Motor neuron (in vitro differentiated cells): ENCODE measurements at regions of chr4 and their contacts with region 1.

Region 1: GRCh38 chr4:140382732-140383131 is 9.3 kb downstream of the SCOC start:
- ATAC-seq: no peak
- H3K4me3 ChIP-seq: no peak overlapping the region
- H3K27ac ChIP-seq: no peak overlapping the region
- H3K4me1 ChIP-seq: peaks cover 0 to under 1% of the 10 kb centered on the region in 2 donors

Region 2: DNA sequence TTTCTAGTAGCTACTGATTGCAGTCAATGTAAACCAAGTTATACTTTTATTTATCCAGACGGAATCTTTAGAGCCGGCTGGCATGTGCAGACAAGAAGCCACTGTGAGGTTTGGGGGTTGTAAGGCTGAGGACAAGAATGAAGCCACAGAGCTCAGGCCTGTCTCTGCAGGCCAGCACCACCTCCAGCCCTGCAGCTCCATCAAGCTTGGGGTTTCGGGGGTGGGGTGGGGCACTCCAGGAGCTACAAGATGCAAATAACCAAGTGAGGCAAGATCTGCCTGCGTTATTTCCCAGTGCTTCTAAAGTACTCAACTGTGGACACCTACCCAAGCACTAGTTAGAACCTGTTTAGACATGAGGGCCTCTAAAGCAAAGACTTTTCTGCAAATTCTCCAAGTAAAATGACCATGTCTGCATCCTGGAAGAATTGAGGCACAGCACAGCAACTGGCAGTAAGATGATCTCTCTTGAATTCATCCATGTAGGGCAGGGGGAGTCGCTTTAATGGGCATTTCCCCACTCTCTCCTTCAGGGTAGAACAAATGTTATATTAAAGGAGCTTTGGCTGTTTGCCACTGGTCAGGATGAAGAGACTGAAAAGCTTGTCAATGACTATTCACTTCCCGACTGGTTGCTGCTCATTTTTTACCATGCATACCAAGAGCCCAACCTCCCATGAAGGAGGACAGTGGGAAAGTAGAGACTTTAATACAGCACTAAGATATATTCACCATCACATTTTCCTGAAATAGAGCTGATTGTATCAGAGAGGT is 494.6 kb before region 1 on chr4:
- in situ Hi-C with region 1: no loop called
- ATAC-seq: peak in 6 of 8 experiments; percentile 39 to 74 (median 62)
- H3K4me3 ChIP-seq: no peak overlapping the region
- H3K27ac ChIP-seq: no peak overlapping the region
- H3K4me1 ChIP-seq: peaks cover 21 to 23% of the 10 kb centered on the region in 2 donors

Region 3: DNA sequence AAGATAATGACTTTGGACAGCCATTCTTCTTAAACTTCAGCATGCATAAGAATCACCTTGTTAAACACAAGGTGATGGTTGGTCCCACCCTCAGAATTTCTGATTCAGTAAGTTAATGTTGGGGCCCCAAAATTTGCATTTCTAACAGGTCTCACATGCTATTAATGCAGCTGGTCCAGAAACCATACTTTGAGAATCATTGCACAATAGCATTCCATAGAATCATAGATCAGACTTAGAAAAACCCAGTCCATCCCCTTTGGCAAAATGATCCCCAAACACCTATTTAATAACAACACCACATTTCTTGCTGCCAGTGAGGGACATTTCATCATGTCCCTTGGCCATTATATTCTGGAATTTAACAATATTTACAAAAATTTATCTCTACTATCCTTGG is 121.5 kb after region 1 on chr4:
- in situ Hi-C with region 1: loop called in 1 of 9 experiments (anchors 10 kb)
- ATAC-seq: no peak
- H3K4me3 ChIP-seq: no peak overlapping the region
- H3K27ac ChIP-seq: no peak overlapping the region
- H3K4me1 ChIP-seq: no peaks in the 10 kb centered on the region

Region 4: DNA sequence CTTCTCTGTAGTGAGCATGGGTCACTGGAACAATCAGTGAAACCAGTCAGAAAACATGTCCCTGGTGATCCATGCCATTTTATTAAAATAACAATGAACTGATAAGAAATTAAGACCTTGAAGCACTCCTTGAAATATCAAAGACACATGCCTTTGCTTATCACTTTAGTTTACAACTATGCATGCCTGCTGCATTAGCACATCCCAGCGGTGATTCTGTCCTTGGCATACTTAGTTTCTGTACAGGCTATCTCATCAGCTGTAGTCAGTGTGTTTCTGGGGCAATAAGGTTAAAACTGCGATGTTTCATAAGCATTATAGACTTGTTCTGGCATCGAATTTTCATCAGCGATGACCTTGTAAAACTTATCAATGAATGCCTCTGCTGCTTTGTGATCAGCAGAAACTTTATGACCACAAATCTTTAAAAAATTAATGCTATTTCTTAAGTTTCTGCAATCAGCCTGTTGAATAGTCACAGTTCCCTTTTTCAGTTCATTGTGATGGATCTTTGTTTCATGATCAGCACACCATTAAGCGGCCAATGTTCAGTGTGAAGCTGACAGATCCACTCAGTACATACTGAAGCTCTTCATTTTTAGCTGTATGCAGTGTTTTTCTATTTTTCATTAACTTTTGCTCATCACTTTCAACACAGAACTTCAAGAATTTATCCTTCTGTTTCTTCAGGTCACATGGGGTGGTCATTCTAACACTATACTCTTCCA is 600.0 kb after region 1 on chr4:
- in situ Hi-C with region 1: no loop called
- ATAC-seq: no peak
- H3K4me3 ChIP-seq: no peak overlapping the region
- H3K27ac ChIP-seq: no peak overlapping the region
- H3K4me1 ChIP-seq: no peaks in the 10 kb centered on the region